ENCODE measurements at regions of chr5 and their contacts with region 1.

Region 1: DNA sequence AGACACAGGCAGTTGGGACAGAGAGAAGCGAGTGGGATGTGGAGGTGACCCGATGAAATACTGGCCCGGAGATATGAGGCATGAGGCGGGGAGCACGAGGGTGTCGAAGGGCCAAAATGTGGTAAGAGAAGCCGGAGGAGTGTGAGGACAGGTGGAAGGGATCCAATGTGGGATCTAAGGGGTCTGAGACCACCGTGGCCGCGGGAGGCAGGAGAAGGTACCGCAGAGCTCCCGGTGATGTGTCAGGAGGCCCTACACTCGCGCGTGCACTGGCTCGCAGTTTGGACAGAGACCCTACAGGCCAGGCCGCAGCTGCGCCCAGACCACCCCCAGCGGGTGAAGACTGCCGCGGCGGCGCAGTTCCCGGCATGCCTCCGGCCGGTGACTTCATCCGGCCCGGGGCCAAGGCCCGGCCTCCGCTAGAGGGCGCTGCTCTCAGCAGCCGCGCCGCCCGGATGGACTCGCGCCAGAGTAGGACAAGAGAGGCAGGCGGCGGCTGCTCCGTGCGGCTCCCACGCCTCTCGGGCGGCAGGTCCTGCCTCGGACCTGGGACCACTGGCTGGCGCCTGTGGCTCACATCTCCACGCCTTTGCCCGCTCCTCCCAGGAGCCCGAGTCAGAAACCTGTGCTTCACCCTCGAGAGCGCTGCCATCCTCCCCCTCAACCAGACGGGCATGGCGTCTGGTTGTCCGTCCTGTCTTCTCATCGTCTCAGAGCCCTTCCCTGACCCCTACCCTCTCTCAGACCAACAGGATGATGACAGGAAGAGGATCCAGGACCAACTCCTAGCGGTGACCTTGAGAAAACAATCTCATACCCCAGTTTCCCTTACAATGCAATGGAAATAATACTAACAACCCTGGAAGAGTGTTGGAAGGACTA is 35.4 kb upstream of the STING1 start:
- DNase-seq: peak; percentile 78 to 97 (median 89)
- ATAC-seq: peak; percentile 97
- H3K4me3 ChIP-seq: peak overlapping the region; percentile 79
- H3K4me3 Mint-ChIP-seq: peak overlapping the region; percentile 88 to 93 (median 90)
- H3K27ac ChIP-seq: peak overlapping the region; percentile 90
- H3K27ac Mint-ChIP-seq: peak overlapping the region; percentile 93 to 99 (median 96)
- H3K4me1 ChIP-seq: peaks cover 0 to 3% of the 10 kb centered on the region in 2 donors
- H3K4me1 Mint-ChIP-seq: peaks cover 14 to 34% (median 26%) of the 10 kb centered on the region in 7 donors
- H3K27me3 ChIP-seq: no peaks in the 10 kb centered on the region
- H3K27me3 Mint-ChIP-seq: no peaks in the 10 kb centered on the region

Region 2: GRCh38 chr5:139293504-139294373 is 224.2 kb before region 1 on chr5 and contains the start of gene MATR3:
- CTCF ChIA-PET with region 1: interaction called, 6 read pairs
- POLR2A ChIA-PET with region 1: no interaction called
- intact Hi-C with region 1: loop called (anchors 1 to 5 kb)
- DNase-seq: peak; percentile 83 to 94 (median 91)
- ATAC-seq: peak; percentile 95
- H3K4me3 ChIP-seq: peak within 1 kb of the TSS; percentile 87
- H3K4me3 Mint-ChIP-seq: peak within 1 kb of the TSS; percentile 91 to 99 (median 98)
- H3K27ac ChIP-seq: peak within 1 kb of the TSS; percentile 98
- H3K27ac Mint-ChIP-seq: peak within 1 kb of the TSS; percentile 96 to 100 (median 99)
- H3K4me1 ChIP-seq: peaks cover 29 to 37% of the 10 kb centered on the region in 2 donors
- H3K4me1 Mint-ChIP-seq: peaks cover 33 to 51% (median 42%) of the 10 kb centered on the region in 7 donors
- H3K27me3 ChIP-seq: no peaks in the 10 kb centered on the region
- H3K27me3 Mint-ChIP-seq: no peaks in the 10 kb centered on the region
- total RNA-seq, gene MATR3: 219 to 333 (median 274) TPM

Region 3: DNA sequence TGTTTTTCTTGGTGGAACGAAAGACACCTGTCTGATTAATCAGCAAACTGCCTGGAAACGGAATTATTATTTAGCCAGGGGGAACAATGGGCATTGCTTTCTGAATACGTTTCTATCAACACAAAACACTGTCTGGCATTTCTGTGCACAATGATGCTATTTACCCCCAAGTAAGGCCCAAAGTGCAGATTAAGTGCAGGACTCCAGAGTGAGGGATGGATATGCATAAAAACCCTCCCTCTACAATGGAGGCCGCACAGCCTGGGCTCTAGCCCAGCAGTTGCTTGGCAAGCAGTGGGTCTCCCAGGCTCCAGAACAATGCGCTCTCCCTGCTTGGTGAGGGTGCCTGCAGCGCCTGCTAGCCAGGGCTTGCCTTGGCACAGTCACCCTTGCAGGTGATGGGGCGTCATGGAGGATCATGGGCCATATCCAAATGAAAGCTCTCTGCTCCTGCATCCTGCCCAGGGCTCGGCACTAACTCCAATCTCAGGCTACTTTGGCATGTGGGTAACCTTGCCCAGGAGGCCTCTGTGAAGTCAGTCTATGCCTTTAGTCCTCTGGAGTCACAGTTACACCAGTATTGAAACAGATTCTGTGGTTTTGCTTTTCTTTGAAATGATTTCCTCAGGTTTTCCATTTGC is 102.6 kb before region 1 on chr5:
- CTCF ChIA-PET with region 1: interaction called, 310 read pairs
- POLR2A ChIA-PET with region 1: interaction called, 102 read pairs
- intact Hi-C with region 1: no loop called
- DNase-seq: no peak
- ATAC-seq: no peak
- H3K4me3 ChIP-seq: no peak overlapping the region
- H3K4me3 Mint-ChIP-seq: peak overlapping the region in 5 of 10 donors; percentile 25 to 83 (median 37)
- H3K27ac ChIP-seq: no peak overlapping the region
- H3K27ac Mint-ChIP-seq: peak overlapping the region in 5 of 9 donors; percentile 7 to 93 (median 27)
- H3K4me1 ChIP-seq: peaks cover 0 to 17% of the 10 kb centered on the region in 2 donors
- H3K4me1 Mint-ChIP-seq: peaks cover 2 to 71% (median 25%) of the 10 kb centered on the region in 7 donors
- H3K27me3 ChIP-seq: no peaks in the 10 kb centered on the region
- H3K27me3 Mint-ChIP-seq: no peaks in the 10 kb centered on the region

Region 4: GRCh38 chr5:139458580-139459406 is 59.1 kb before region 1 on chr5:
- CTCF ChIA-PET with region 1: interaction called, 7 read pairs
- POLR2A ChIA-PET with region 1: interaction called, 3 read pairs
- intact Hi-C with region 1: loop called (anchors 1 to 2 kb)
- DNase-seq: peak in 8 of 9 donors; percentile 71 to 89 (median 85)
- ATAC-seq: peak; percentile 98
- H3K4me3 ChIP-seq: peak overlapping the region; percentile 10
- H3K4me3 Mint-ChIP-seq: peak overlapping the region; percentile 38 to 86 (median 64)
- H3K27ac ChIP-seq: peak overlapping the region; percentile 73
- H3K27ac Mint-ChIP-seq: peak overlapping the region; percentile 89 to 98 (median 94)
- H3K4me1 ChIP-seq: peaks cover 35 to 49% of the 10 kb centered on the region in 2 donors
- H3K4me1 Mint-ChIP-seq: peaks cover 33 to 72% (median 64%) of the 10 kb centered on the region in 7 donors
- H3K27me3 ChIP-seq: no peaks in the 10 kb centered on the region
- H3K27me3 Mint-ChIP-seq: no peaks in the 10 kb centered on the region

Region 5: GRCh38 chr5:139501381-139501780 is 16.5 kb before region 1 on chr5:
- CTCF ChIA-PET with region 1: interaction called, 10 read pairs
- POLR2A ChIA-PET with region 1: interaction called, 3 read pairs
- intact Hi-C with region 1: no loop called
- DNase-seq: no peak
- ATAC-seq: no peak
- H3K4me3 ChIP-seq: no peak overlapping the region
- H3K4me3 Mint-ChIP-seq: no peak overlapping the region
- H3K27ac ChIP-seq: no peak overlapping the region
- H3K27ac Mint-ChIP-seq: no peak overlapping the region
- H3K4me1 ChIP-seq: no peaks in the 10 kb centered on the region
- H3K4me1 Mint-ChIP-seq: peaks cover 0 to 3% (median 0%) of the 10 kb centered on the region in 7 donors
- H3K27me3 ChIP-seq: no peaks in the 10 kb centered on the region
- H3K27me3 Mint-ChIP-seq: peaks cover 0 to 8% (median 0%) of the 10 kb centered on the region in 5 donors

Region 6: DNA sequence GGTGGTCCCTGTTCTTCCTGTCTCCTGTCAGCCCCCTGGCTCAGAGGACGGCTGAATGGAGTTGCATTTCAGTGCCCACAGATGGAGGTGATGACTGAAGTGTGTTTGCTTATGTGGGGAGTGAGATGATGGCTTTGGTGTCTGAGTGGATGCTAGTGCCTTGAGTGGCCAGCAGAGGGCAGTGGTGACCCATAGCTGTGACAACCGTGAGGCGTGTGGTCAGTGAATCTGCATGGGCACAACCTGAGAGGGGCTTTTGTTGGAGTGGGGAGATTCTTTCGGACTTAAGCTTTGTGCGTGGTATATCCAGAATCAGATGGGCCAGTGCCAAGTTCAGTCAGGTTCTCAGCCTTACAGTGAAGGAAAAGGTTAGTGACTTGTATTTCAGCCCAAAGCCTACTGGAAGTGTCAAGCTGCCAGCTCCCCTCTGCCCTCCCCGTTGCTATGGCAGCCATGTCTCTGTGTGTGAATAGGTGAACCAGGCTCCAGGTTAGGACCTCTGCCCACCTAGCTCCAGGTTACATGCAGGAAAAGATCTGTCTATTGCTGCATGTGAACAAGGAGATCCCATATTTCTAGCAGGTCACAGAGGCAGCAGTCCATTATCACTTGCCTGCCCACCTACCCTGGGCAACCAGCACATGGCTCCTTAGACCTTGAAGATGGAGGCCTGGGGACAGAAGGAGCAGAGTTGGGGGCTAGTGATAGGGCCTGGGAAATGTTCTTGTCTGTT is 115.5 kb after region 1 on chr5:
- CTCF ChIA-PET with region 1: interaction called, 5 read pairs
- POLR2A ChIA-PET with region 1: interaction called, 3 read pairs
- intact Hi-C with region 1: loop called (anchors 1 to 5 kb)
- DNase-seq: peak; percentile 49 to 68 (median 62)
- ATAC-seq: peak; percentile 66
- H3K4me3 ChIP-seq: no peak overlapping the region
- H3K4me3 Mint-ChIP-seq: no peak overlapping the region
- H3K27ac ChIP-seq: no peak overlapping the region
- H3K27ac Mint-ChIP-seq: peak overlapping the region in 6 of 9 donors; percentile 3 to 41 (median 22)
- H3K4me1 ChIP-seq: peaks cover 27 to 28% of the 10 kb centered on the region in 2 donors
- H3K4me1 Mint-ChIP-seq: peaks cover 22 to 40% (median 39%) of the 10 kb centered on the region in 7 donors
- H3K27me3 ChIP-seq: no peaks in the 10 kb centered on the region
- H3K27me3 Mint-ChIP-seq: peaks cover 0 to 5% (median 0%) of the 10 kb centered on the region in 5 donors

Region 7: DNA sequence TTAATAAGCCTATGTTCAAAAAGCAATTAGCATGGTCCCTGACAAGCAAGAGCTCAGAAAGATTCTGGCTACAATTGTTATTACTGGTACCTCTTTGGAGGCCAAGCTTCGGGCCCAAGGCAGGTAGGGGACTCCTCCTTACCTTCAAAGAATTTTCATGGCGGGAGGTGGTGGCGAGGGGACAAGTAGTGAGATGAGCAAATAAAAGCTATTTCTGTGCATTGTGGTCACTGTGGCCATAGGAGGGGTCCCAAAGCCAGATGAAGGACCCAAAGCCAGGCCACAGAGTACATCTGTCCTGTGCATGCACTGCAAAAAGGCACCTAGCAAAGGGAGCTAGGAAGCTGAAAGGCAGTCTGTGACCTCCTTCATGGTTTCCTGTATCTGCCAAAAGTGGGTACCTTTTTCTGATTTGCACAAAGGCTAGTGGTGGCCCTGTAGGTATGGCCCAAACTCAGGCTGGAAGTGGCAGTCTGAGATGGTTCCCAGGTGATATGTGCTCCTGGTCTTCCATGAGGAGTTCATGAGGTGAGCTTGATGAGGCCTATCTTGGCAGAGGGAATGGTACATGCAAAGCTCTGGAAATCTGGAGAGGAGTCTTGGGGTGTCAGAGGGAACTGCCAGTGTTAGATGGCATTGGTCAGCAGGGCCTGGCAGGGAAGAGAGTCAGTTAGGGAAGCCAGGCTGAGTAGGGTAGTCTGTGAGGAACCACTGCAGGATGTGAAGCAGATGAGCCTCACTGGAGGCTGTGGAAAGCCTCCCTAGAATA is 126.9 kb after region 1 on chr5:
- CTCF ChIA-PET with region 1: no interaction called
- POLR2A ChIA-PET with region 1: no interaction called
- intact Hi-C with region 1: no loop called
- DNase-seq: no peak
- ATAC-seq: no peak
- H3K4me3 ChIP-seq: no peak overlapping the region
- H3K4me3 Mint-ChIP-seq: no peak overlapping the region
- H3K27ac ChIP-seq: no peak overlapping the region
- H3K27ac Mint-ChIP-seq: peak overlapping the region in 1 of 9 donors; percentile 18
- H3K4me1 ChIP-seq: peaks cover 0 to 26% of the 10 kb centered on the region in 2 donors
- H3K4me1 Mint-ChIP-seq: peaks cover 7 to 24% (median 19%) of the 10 kb centered on the region in 7 donors
- H3K27me3 ChIP-seq: peaks cover 0 to 15% of the 10 kb centered on the region in 2 donors
- H3K27me3 Mint-ChIP-seq: peaks cover 8 to 37% (median 18%) of the 10 kb centered on the region in 5 donors

Region 8: DNA sequence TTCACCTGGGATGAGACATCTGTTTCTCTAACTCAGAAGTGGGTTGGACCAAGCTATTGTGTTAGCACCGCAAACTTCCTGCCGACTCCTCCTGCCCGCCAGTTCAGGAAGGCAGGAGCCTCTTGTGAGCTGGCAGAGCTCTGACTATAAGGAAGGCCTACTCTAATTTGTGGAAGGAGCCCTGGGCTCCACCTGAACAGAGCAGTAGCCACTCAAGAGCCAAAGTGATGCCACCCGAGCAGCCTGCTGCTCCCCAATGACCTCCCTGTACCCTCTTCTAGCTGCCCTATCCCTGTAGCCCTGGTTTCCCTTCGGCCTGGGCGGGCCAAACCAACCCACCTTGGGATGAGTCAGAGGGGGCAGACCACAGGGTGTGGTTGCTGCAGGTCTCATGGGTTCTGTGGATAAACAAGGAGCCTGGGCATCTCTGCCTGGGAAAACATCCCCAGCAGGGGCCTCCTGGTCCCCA is 359.2 kb after region 1 on chr5:
- CTCF ChIA-PET with region 1: no interaction called
- POLR2A ChIA-PET with region 1: no interaction called
- intact Hi-C with region 1: no loop called
- DNase-seq: peak in 1 of 9 donors; percentile 7
- ATAC-seq: no peak
- H3K4me3 ChIP-seq: no peak overlapping the region
- H3K4me3 Mint-ChIP-seq: no peak overlapping the region
- H3K27ac ChIP-seq: no peak overlapping the region
- H3K27ac Mint-ChIP-seq: peak overlapping the region in 1 of 9 donors; percentile 32
- H3K4me1 ChIP-seq: no peaks in the 10 kb centered on the region
- H3K4me1 Mint-ChIP-seq: peaks cover 0 to 5% (median 0%) of the 10 kb centered on the region in 7 donors
- H3K27me3 ChIP-seq: no peaks in the 10 kb centered on the region
- H3K27me3 Mint-ChIP-seq: peaks cover 3 to 16% (median 13%) of the 10 kb centered on the region in 5 donors

Region 9: GRCh38 chr5:140011297-140011802 is 493.4 kb after region 1 on chr5:
- CTCF ChIA-PET with region 1: no interaction called
- POLR2A ChIA-PET with region 1: no interaction called
- intact Hi-C with region 1: no loop called
- DNase-seq: no peak
- ATAC-seq: no peak
- H3K4me3 ChIP-seq: no peak overlapping the region
- H3K4me3 Mint-ChIP-seq: no peak overlapping the region
- H3K27ac ChIP-seq: no peak overlapping the region
- H3K27ac Mint-ChIP-seq: no peak overlapping the region
- H3K4me1 ChIP-seq: no peaks in the 10 kb centered on the region
- H3K4me1 Mint-ChIP-seq: no peaks in the 10 kb centered on the region
- H3K27me3 ChIP-seq: peaks cover 0 to 6% of the 10 kb centered on the region in 2 donors
- H3K27me3 Mint-ChIP-seq: peaks cover 2 to 6% (median 5%) of the 10 kb centered on the region in 5 donors